ENCODE measurements at regions of chr9 and their contacts with region 1.

Region 1: GRCh38 chr9:5582835-5583195 is 46.1 kb upstream of the RIC1 start:
- DNase-seq: no peak
- H3K4me3 ChIP-seq: no peak overlapping the region
- H3K4me1 ChIP-seq: no peaks in the 10 kb centered on the region
- H3K27me3 ChIP-seq: no peaks in the 10 kb centered on the region

Region 2: DNA sequence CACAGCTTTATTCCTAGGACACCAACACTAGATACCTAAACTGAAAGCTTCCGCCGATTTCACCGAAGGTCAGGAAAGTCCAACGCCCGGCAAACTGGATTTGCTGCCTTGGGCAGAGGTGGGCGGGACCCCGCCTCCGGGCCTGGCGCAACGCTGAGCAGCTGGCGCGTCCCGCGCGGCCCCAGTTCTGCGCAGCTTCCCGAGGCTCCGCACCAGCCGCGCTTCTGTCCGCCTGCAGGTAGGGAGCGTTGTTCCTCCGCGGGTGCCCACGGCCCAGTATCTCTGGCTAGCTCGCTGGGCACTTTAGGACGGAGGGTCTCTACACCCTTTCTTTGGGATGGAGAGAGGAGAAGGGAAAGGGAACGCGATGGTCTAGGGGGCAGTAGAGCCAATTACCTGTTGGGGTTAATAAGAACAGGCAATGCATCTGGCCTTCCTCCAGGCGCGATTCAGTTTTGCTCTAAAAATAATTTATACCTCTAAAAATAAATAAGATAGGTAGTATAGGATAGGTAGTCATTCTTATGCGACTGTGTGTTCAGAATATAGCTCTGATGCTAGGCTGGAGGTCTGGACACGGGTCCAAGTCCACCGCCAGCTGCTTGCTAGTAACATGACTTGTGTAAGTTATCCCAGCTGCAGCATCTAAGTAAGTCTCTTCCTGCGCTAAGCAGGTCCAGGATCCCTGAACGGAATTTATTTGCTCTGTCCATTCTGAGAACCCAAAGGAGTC is 132.3 kb before region 1 on chr9 and contains the start of gene CD274:
- in situ Hi-C with region 1: loop called (anchors 10 kb)
- DNase-seq: peak; percentile 77 to 90
- H3K4me3 ChIP-seq: peak within 1 kb of the TSS; percentile 28
- H3K4me1 ChIP-seq: peaks cover 7% of the 10 kb centered on the region
- H3K27me3 ChIP-seq: no peaks in the 10 kb centered on the region

Region 3: GRCh38 chr9:5767968-5768918 is 185.4 kb after region 1 on chr9:
- in situ Hi-C with region 1: no loop called
- DNase-seq: no peak
- H3K4me3 ChIP-seq: no peak overlapping the region
- H3K4me1 ChIP-seq: no peaks in the 10 kb centered on the region
- H3K27me3 ChIP-seq: no peaks in the 10 kb centered on the region